ENCODE measurements at regions of chr15 and their contacts with region 1.

Region 1: GRCh38 chr15:62896978-62897647 is 145.4 kb upstream of the TPM1 start:
- DNase-seq: peak; percentile 98
- H3K4me3 ChIP-seq: peak overlapping the region in 1 of 3 experiments; percentile 25
- H3K27ac ChIP-seq: peak overlapping the region; percentile 100
- H3K4me1 ChIP-seq: peaks cover 79% of the 10 kb centered on the region
- H3K27me3 ChIP-seq: no peaks in the 10 kb centered on the region
- CTCF ChIP-seq: no peak

Region 2: DNA sequence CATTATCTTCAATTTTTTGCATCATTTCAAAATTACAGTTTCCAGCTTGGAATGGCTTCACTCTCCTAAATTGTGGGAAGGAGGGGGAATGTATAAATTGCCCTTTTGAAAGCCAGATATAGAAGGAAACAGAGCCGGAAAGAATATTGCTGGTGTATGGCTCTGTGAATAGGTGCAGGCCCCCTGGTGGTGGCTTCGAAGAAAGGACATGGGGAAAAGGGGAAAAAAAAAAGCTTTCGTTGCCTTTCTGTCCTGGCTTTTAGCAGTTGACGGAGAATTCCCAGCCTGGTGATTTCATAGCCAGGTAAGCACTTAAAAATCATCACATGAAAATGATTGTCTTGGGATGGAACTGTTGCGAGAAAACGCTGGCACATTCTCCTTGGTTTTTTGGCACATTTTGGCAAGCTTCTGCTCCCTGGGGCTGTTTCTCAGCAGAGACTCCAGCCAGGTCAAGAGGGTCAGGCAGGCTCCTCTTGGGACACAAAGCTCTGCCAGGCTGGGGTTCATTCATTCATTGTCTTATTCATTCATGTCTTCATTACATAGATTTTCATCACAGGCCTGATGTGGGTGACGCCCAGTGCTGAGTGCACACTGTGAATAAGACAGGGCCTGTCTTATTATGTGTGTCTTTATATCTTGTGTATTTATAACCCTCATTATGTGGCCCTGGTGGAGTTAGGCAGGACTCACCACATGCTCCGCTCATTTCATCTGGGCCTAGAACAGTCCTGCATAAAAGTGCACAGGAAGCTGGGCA is 154.5 kb before region 1 on chr15:
- CTCF ChIA-PET with region 1: no interaction called
- dilution Hi-C with region 1: no loop called
- in situ Hi-C with region 1: no loop called
- intact Hi-C with region 1: loop called (anchors 2 kb)
- DNase-seq: peak; percentile 70
- H3K4me3 ChIP-seq: no peak overlapping the region
- H3K27ac ChIP-seq: peak overlapping the region; percentile 38
- H3K4me1 ChIP-seq: peaks cover 55% of the 10 kb centered on the region
- H3K27me3 ChIP-seq: no peaks in the 10 kb centered on the region
- CTCF ChIP-seq: peak; percentile 83 to 85

Region 3: GRCh38 chr15:62847900-62848489 is 49.1 kb before region 1 on chr15:
- CTCF ChIA-PET with region 1: no interaction called
- dilution Hi-C with region 1: no loop called
- in situ Hi-C with region 1: no loop called
- intact Hi-C with region 1: loop called (anchors 1 kb)
- DNase-seq: peak; percentile 48
- H3K4me3 ChIP-seq: no peak overlapping the region
- H3K27ac ChIP-seq: no peak overlapping the region
- H3K4me1 ChIP-seq: peaks cover 23% of the 10 kb centered on the region
- H3K27me3 ChIP-seq: no peaks in the 10 kb centered on the region
- CTCF ChIP-seq: peak; percentile 71 to 81

Region 4: DNA sequence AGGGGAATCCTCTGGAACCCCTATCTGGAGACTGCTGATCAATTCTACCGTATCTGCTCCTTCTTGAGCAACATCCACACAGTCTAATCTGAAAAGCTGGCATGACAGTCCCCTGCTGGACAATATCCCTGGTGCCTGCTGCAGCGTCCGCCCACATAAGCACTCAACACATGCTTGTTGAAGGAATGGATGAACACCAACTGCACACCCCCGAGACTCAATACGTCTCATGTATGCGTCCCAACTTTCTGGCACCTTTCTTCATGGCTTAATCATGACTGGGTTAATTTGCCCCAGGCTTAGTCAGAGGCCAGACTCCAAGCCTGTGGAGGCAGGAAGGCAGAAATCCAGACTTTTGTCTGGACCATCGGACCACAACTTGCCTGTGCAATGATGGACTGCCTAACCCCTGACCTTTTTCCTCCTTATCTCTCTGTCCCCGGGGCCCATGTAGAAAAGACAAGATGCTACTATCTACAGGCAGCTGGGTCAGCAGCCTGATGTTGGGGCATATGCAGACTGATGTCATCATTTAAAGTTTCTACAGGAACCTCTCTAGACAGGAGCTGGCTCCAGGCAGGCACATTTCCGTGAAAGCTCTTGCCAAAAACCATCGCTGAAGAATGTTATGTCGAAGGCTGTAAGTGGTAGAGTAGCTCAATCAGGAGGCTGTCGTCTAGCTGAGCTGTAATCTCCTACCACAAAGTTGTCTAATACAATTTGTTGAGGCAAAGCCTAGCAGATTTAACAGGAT is 31.3 kb after region 1 on chr15:
- CTCF ChIA-PET with region 1: no interaction called
- dilution Hi-C with region 1: no loop called
- in situ Hi-C with region 1: no loop called
- intact Hi-C with region 1: loop called (anchors 2 kb)
- DNase-seq: peak; percentile 88
- H3K4me3 ChIP-seq: no peak overlapping the region
- H3K27ac ChIP-seq: peak overlapping the region; percentile 87
- H3K4me1 ChIP-seq: peaks cover 32% of the 10 kb centered on the region
- H3K27me3 ChIP-seq: no peaks in the 10 kb centered on the region
- CTCF ChIP-seq: peak; percentile 39 to 46

Region 5: DNA sequence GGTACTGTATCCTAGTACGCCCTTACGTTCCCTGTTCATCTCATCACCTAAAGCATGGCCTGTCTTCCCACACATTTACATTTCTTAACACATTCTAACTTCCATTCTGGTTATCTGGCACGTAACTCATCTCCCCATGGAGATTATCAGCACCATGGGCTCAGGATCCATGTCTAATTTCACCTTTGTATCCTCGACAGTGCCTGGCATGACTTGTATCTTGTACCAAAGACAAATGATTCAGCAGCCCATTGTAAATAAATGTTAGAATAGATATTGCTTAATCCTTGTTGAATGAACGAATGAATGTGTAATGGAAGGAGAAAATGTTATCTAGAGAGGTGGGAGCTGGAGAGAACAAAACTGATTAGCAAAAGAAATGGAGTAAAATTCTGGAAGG is 75.7 kb after region 1 on chr15:
- CTCF ChIA-PET with region 1: no interaction called
- dilution Hi-C with region 1: loop called (anchors 5 kb)
- in situ Hi-C with region 1: no loop called
- intact Hi-C with region 1: loop called (anchors 2 kb)
- DNase-seq: peak; percentile 80
- H3K4me3 ChIP-seq: no peak overlapping the region
- H3K27ac ChIP-seq: no peak overlapping the region
- H3K4me1 ChIP-seq: peaks cover 17% of the 10 kb centered on the region
- H3K27me3 ChIP-seq: no peaks in the 10 kb centered on the region
- CTCF ChIP-seq: no peak

Region 6: GRCh38 chr15:63573533-63573932 is 676.4 kb after region 1 on chr15:
- CTCF ChIA-PET with region 1: no interaction called
- dilution Hi-C with region 1: no loop called
- in situ Hi-C with region 1: no loop called
- intact Hi-C with region 1: no loop called
- DNase-seq: no peak
- H3K4me3 ChIP-seq: no peak overlapping the region
- H3K27ac ChIP-seq: no peak overlapping the region
- H3K4me1 ChIP-seq: no peaks in the 10 kb centered on the region
- H3K27me3 ChIP-seq: no peaks in the 10 kb centered on the region
- CTCF ChIP-seq: no peak